Head of caudate nucleus (tissue), 42 donors: ENCODE measurements at regions of chr17 and their contacts with region 1.

Region 1: GRCh38 chr17:37609170-37610040 is at the start of gene SYNRG:
- DNase-seq: peak; percentile 94 to 99 (median 97)

Region 2: DNA sequence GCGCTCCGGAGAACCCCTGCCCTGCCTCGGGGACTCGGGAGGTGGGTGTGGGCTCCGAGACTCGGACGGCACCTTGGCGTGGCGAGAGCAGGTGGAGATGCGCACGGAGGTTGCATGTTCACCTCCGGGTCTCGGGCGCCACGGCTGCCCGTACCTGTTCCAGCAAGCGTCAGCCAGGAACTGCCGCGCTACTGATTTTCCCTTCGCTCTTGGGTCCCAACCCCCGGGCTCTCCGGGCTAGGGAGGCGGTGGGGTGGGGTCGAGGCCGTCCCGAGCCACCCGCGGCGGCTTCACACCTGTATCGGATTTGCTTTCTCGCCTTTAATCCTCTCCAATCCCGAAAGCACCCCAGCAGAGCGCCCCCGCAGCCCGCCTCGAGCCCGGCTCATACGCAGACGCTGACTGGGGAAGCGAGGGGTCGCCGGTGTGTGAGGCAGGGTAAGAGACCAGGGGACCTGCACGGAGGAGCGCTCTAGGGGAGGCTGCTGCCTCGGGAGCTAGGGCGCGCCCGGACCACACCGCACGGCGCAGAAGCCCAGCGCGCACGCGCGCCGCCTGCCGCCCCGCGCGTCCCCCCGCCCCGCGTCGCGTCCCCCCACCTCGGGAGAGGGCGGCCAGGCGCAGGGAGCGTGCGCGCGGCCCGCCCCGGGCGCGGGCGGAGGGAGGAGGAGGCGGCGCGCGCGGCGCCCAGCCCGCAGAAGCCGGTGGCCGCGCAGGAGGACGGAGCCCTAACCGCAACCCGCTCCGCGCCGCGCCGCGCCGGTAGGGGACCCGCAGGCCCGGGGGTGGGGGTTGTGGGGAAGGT is 120.0 kb before region 1 on chr17 and contains the start of gene DUSP14:
- intact Hi-C with region 1: loop called (anchors 5 kb)
- DNase-seq: peak; percentile 33 to 91 (median 83)